Ovary (tissue), 10 donors: ENCODE measurements at regions of chr14 and their contacts with region 1.

Region 1: GRCh38 chr14:98766818-98767217 is 505.2 kb downstream of the BCL11B start:
- DNase-seq: no peak
- H3K4me3 ChIP-seq: no peak overlapping the region
- H3K27ac ChIP-seq: no peak overlapping the region
- H3K4me1 ChIP-seq: no peaks in the 10 kb centered on the region
- H3K27me3 ChIP-seq: no peaks in the 10 kb centered on the region
- CTCF ChIP-seq: no peak
- EP300 ChIP-seq: no peak
- POLR2A ChIP-seq: no peak

Region 2: DNA sequence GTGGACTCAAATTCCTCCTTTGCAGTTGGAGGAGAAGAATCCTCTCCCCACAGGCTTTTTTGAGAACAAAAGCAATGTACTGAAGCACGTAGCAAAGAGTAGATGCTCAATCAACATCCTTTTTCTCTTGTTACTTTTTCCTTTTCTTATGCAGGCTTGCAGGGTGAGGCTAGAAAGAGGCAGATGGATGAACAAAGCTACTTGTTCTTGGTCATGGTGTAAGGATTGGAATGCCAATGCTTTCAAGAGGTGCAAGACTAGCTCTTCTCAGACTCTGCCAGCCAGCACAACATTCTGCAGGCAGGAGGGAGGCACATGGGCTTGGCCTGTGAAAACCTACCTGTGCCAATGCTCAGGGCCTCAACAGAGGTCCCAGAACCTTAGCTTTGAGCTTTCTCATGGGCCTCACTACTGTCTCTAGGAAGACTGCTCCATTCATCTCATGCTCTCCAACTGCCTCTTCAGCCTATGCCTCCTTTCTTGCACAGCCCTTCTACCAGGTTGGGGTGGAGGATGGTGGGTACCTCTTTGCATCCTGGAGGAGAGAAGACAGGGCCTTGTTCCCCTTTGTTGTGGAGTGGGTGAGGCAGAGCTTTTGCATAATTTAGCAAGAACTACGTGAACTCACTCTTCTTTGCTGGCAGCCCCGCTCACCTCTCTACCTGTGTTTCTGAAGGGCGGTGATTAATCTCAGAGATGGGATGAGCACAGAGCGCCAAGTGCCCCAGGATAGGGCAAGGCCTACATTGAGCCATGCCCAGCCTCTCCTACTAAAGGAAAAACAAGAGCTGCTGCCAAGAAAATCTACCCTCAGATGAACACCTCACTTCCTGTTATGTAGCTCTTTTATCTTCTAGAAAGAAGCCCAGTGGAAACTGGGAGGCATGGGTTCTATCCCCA is 849.9 kb before region 1 on chr14:
- intact Hi-C with region 1: no loop called
- DNase-seq: no peak
- H3K4me3 ChIP-seq: no peak overlapping the region
- H3K27ac ChIP-seq: no peak overlapping the region
- H3K4me1 ChIP-seq: no peaks in the 10 kb centered on the region
- H3K27me3 ChIP-seq: no peaks in the 10 kb centered on the region
- CTCF ChIP-seq: no peak
- EP300 ChIP-seq: no peak
- POLR2A ChIP-seq: no peak

Region 3: DNA sequence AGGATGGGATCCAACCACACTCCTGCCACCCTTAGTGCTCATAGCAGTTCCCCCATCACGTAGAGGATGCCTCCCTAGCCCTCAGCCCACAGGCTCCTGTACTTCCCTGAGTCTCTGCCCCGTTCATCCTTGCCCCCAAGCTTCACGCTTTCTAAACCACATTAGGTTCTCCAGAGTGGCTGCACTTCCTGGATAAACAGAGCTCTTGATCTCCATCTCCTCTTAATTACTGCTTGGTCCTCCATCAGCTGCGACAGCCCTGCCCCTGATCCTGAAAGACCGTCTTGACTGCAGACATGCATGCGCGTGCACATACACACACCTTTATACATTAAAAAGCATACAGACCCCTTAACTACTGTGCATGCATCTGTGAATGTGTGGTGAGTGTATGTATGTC is 24.8 kb before region 1 on chr14:
- intact Hi-C with region 1: loop called in 1 of 4 experiments (anchors 1 kb)
- DNase-seq: no peak
- H3K4me3 ChIP-seq: no peak overlapping the region
- H3K27ac ChIP-seq: no peak overlapping the region
- H3K4me1 ChIP-seq: no peaks in the 10 kb centered on the region
- H3K27me3 ChIP-seq: no peaks in the 10 kb centered on the region
- CTCF ChIP-seq: no peak
- EP300 ChIP-seq: no peak
- POLR2A ChIP-seq: no peak